ENCODE measurements at regions of chr12 and their contacts with region 1.

Region 1: DNA sequence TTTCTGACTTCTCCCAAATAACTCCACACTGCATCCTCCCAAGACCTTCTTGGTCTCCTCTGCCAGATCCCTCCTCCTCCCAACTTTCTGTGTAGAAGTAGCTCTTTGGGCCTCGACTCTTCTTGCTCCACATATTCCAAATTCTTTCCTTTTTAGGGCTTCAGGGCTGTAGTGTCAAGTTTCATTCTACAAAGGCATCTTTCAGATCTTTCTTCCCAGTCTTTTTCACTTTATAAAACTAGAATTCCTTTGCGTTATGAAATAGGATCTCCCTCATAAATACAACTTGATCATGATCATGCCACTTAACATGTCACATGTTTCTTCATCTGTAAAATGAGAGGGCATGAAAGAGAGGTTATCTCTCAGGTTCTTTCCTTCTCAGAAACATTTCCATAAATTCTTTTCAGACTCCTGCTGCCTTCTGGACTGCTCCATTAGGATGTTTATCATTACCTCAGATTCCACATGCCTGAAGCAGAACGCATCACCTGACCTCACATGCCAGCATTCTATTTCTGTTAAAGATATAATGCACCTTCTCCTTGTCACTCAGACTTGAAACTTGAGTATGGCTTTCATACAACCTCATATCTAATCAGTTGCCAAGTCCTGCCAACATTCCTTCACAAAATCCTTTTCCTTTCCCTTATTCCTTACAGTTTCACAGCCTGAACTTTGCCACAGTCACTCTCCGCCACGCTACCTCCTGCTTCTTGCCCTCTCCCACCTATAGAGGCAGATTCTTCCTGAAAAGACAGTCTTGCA is 8.5 kb downstream of the SLC38A1 start:
- DNase-seq: no peak
- ATAC-seq: no peak
- H3K4me3 Mint-ChIP-seq: no peak overlapping the region
- H3K27ac Mint-ChIP-seq: no peak overlapping the region
- H3K4me1 Mint-ChIP-seq: peaks cover 35% of the 10 kb centered on the region
- H3K27me3 Mint-ChIP-seq: no peaks in the 10 kb centered on the region

Region 2: GRCh38 chr12:46217541-46218321 is 42.6 kb before region 1 on chr12:
- CTCF ChIA-PET with region 1: interaction called, 4 read pairs
- POLR2A ChIA-PET with region 1: interaction called, 28 read pairs
- DNase-seq: peak; percentile 82
- ATAC-seq: peak; percentile 8
- H3K4me3 Mint-ChIP-seq: peak overlapping the region; percentile 61
- H3K27ac Mint-ChIP-seq: peak overlapping the region; percentile 84
- H3K4me1 Mint-ChIP-seq: peaks cover 95% of the 10 kb centered on the region
- H3K27me3 Mint-ChIP-seq: no peaks in the 10 kb centered on the region

Region 3: GRCh38 chr12:46282829-46283228 is 22.5 kb after region 1 on chr12:
- CTCF ChIA-PET with region 1: no interaction called
- POLR2A ChIA-PET with region 1: no interaction called
- DNase-seq: no peak
- ATAC-seq: no peak
- H3K4me3 Mint-ChIP-seq: no peak overlapping the region
- H3K27ac Mint-ChIP-seq: no peak overlapping the region
- H3K4me1 Mint-ChIP-seq: no peaks in the 10 kb centered on the region
- H3K27me3 Mint-ChIP-seq: no peaks in the 10 kb centered on the region